Naive thymus-derived CD4-positive, alpha-beta T cell (primary cell): ENCODE measurements at regions of chr6 and their contacts with region 1.

Region 1: GRCh38 chr6:163474581-163474980 is 60.1 kb downstream of the QKI start:
- DNase-seq: no peak
- ATAC-seq: no peak
- H3K4me3 ChIP-seq: no peak overlapping the region
- H3K4me3 Mint-ChIP-seq: no peak overlapping the region
- H3K27ac ChIP-seq: no peak overlapping the region
- H3K27ac Mint-ChIP-seq: no peak overlapping the region
- H3K4me1 ChIP-seq: no peaks in the 10 kb centered on the region
- H3K4me1 Mint-ChIP-seq: peaks cover 6 to 44% (median 22%) of the 10 kb centered on the region in 7 donors
- H3K27me3 ChIP-seq: no peaks in the 10 kb centered on the region
- H3K27me3 Mint-ChIP-seq: no peaks in the 10 kb centered on the region

Region 2: DNA sequence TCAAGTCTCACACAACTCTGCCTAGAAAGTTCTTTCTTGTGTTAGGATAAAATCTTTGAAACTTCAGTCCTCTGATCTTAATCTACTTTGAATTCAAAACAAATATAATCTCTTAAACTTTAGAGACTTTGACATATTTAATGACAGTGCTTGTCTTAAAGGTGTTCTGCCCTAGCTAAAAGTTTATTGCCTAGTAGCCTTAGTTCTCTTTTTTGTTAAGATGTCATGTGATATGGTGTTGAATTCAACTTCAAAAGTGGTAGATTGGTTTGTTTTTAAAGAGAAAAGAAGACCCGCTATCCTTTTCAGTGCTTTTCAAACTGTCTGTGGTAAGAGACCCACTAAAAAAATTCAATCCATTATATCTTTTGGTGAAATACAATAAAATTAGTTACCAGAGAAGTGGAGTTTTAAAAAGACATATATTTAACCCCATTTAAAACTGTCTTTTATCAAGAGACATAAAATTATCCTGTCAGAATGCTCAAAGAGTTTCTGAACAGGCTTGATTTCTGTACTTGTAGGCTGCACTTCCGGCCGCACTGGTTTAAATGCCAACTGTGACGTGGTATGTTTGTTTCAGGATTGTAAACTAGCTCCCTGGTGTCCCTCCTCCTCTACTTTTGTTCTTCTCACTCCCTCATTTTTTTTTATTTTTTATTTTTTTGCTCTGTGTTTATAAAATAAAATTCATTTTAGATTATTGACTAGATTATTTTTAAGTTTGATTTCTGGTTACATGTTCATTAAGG is 16.4 kb after region 1 on chr6:
- CTCF ChIA-PET with region 1: no interaction called
- POLR2A ChIA-PET with region 1: no interaction called
- intact Hi-C with region 1: loop called in 1 of 2 experiments (anchors 2 kb)
- DNase-seq: peak in 5 of 9 donors; percentile 5 to 28 (median 17)
- ATAC-seq: peak; percentile 54
- H3K4me3 ChIP-seq: no peak overlapping the region
- H3K4me3 Mint-ChIP-seq: peak overlapping the region in 7 of 10 donors; percentile 18 to 54 (median 40)
- H3K27ac ChIP-seq: peak overlapping the region; percentile 11
- H3K27ac Mint-ChIP-seq: peak overlapping the region in 8 of 9 donors; percentile 21 to 85 (median 57)
- H3K4me1 ChIP-seq: peaks cover 6% of the 10 kb centered on the region in 2 donors
- H3K4me1 Mint-ChIP-seq: peaks cover 25 to 73% (median 61%) of the 10 kb centered on the region in 7 donors
- H3K27me3 ChIP-seq: no peaks in the 10 kb centered on the region
- H3K27me3 Mint-ChIP-seq: no peaks in the 10 kb centered on the region

Region 3: DNA sequence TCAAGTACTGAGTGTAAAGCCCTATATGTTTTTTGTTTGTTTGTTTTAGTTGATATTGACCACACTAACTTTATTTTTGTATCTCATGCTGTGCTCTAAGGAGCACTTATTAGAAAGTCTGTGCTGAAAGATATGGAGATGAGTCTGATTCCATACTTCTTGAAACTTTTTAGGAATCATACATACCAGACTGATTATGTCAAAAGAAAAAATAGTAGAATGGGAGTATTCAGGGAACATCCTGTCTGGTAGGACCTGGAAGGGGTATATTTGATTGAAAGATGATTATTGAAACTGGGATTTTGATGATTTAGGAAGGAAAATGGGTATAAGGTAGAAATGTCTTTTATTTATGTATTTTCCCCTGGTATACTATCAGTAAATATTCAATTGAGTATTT is 51.3 kb after region 1 on chr6:
- CTCF ChIA-PET with region 1: no interaction called
- POLR2A ChIA-PET with region 1: no interaction called
- intact Hi-C with region 1: no loop called
- DNase-seq: no peak
- ATAC-seq: no peak
- H3K4me3 ChIP-seq: no peak overlapping the region
- H3K4me3 Mint-ChIP-seq: no peak overlapping the region
- H3K27ac ChIP-seq: no peak overlapping the region
- H3K27ac Mint-ChIP-seq: peak overlapping the region in 1 of 9 donors; percentile 24
- H3K4me1 ChIP-seq: peaks cover 0 to 2% of the 10 kb centered on the region in 2 donors
- H3K4me1 Mint-ChIP-seq: peaks cover 0 to 60% (median 56%) of the 10 kb centered on the region in 7 donors
- H3K27me3 ChIP-seq: no peaks in the 10 kb centered on the region
- H3K27me3 Mint-ChIP-seq: no peaks in the 10 kb centered on the region